GM12878 (cell line): ENCODE measurements at regions of chr15 and their contacts with region 1.

Region 1: GRCh38 chr15:73081321-73081958 is 29.2 kb downstream of the NEO1 start:
- DNase-seq: no peak
- ATAC-seq: peak; percentile 50; the same call in 1 of the 3 replicates
- H3K4me3 ChIP-seq: no peak overlapping the region
- H3K27ac ChIP-seq: no peak overlapping the region
- H3K4me1 ChIP-seq: no peaks in the 10 kb centered on the region
- H3K27me3 ChIP-seq: no peaks in the 10 kb centered on the region
- CTCF ChIP-seq: peak; percentile 33 to 54 (median 38); a peak in 5 of 6 replicates
- EP300 ChIP-seq: no peak
- POLR2A ChIP-seq: no peak
- RAD21 ChIP-seq: peak; percentile 75

Region 2: DNA sequence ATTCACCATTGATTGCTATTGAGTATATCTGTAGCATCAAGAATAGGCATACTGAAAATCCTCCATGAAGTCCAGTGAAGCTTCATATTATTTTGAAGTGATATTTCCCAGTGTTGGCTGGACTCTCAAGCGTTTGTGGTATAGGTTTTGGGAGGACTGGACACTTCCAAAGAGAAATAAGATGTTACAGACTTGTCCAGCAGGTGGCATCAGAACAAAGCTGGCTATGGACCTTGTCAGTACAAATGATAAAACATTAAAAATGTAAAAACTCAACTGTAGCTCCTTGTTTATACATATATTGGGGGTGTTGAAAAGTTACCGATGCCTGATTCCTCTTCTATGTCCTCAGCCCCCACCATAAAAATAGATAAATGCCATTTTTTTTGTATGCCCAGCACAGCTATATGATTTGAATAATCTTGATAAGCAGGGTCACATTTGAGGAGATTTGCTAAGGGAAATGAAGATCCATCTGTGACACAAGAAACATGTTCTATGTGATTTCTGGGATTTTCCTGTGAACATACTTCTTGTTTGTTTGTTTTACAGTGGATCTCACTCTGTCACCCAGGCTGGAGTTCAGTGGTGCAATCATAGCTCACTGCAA is 481.5 kb before region 1 on chr15:
- CTCF ChIA-PET with region 1: interaction called, 16 read pairs
- POLR2A ChIA-PET with region 1: no interaction called
- RAD21 ChIA-PET with region 1: interaction called, 5 read pairs
- SMC1A ChIA-PET with region 1: no interaction called
- in situ Hi-C with region 1: no loop called
- intact Hi-C with region 1: loop called (anchors 5 kb)
- DNase-seq: no peak
- ATAC-seq: peak; percentile 80
- H3K4me3 ChIP-seq: no peak overlapping the region
- H3K27ac ChIP-seq: no peak overlapping the region
- H3K4me1 ChIP-seq: no peaks in the 10 kb centered on the region
- H3K27me3 ChIP-seq: no peaks in the 10 kb centered on the region
- CTCF ChIP-seq: peak; percentile 50 to 62 (median 60)
- EP300 ChIP-seq: no peak
- POLR2A ChIP-seq: no peak
- RAD21 ChIP-seq: peak; percentile 56

Region 3: GRCh38 chr15:72732516-72732915 is 348.9 kb before region 1 on chr15:
- CTCF ChIA-PET with region 1: interaction called, 3 read pairs
- POLR2A ChIA-PET with region 1: no interaction called
- RAD21 ChIA-PET with region 1: no interaction called
- SMC1A ChIA-PET with region 1: no interaction called
- in situ Hi-C with region 1: loop called (anchors 5 kb)
- intact Hi-C with region 1: no loop called
- DNase-seq: no peak
- ATAC-seq: 0 out of 3 replicates have a peak, but pooled peaks have one; percentile 41
- H3K4me3 ChIP-seq: no peak overlapping the region
- H3K27ac ChIP-seq: no peak overlapping the region
- H3K4me1 ChIP-seq: no peaks in the 10 kb centered on the region; the same call in 1 of the 2 replicates
- H3K27me3 ChIP-seq: no peaks in the 10 kb centered on the region
- CTCF ChIP-seq: peak in 1 of 3 experiments; percentile 14; a peak in 1 of 6 replicates
- EP300 ChIP-seq: no peak
- POLR2A ChIP-seq: no peak
- RAD21 ChIP-seq: 0 out of 2 replicates have a peak, but pooled peaks have one; percentile 3

Region 4: GRCh38 chr15:72783563-72784237 is 297.7 kb before region 1 on chr15 and contains the start of gene ADPGK:
- CTCF ChIA-PET with region 1: interaction called, 4 read pairs
- POLR2A ChIA-PET with region 1: no interaction called
- RAD21 ChIA-PET with region 1: no interaction called
- SMC1A ChIA-PET with region 1: interaction called, 4 read pairs
- in situ Hi-C with region 1: loop called (anchors 5 kb)
- intact Hi-C with region 1: no loop called
- DNase-seq: peak; percentile 70
- ATAC-seq: peak; percentile 86
- H3K4me3 ChIP-seq: peak within 1 kb of the TSS; percentile 94
- H3K27ac ChIP-seq: peak within 1 kb of the TSS; percentile 93
- H3K4me1 ChIP-seq: peaks cover 31% of the 10 kb centered on the region
- H3K27me3 ChIP-seq: no peaks in the 10 kb centered on the region
- CTCF ChIP-seq: 0 out of 6 replicates have a peak, but pooled peaks of 1 of the 3 experiments have one; percentile 0
- EP300 ChIP-seq: peak in 1 of 2 experiments; percentile 34; a peak in 1 of 4 replicates
- POLR2A ChIP-seq: peak; percentile 98
- RAD21 ChIP-seq: no peak
- polyA plus RNA-seq, gene ADPGK: 13.8 to 18.1 TPM

Region 5: GRCh38 chr15:72796515-72797337 is 284.7 kb before region 1 on chr15:
- CTCF ChIA-PET with region 1: interaction called, 10 read pairs
- POLR2A ChIA-PET with region 1: no interaction called
- RAD21 ChIA-PET with region 1: no interaction called
- SMC1A ChIA-PET with region 1: no interaction called
- in situ Hi-C with region 1: no loop called
- intact Hi-C with region 1: loop called (anchors 1 kb)
- DNase-seq: no peak
- ATAC-seq: peak; percentile 96
- H3K4me3 ChIP-seq: peak overlapping the region; percentile 25; the same call in 1 of the 2 replicates
- H3K27ac ChIP-seq: no peak overlapping the region
- H3K4me1 ChIP-seq: peaks cover 8% of the 10 kb centered on the region; the same call in 1 of the 2 replicates
- H3K27me3 ChIP-seq: peaks cover 0 to 3% of the 10 kb centered on the region in 2 experiments; a peak in 1 of 4 replicates
- CTCF ChIP-seq: peak; percentile 50 to 55 (median 52); a peak in 5 of 6 replicates
- EP300 ChIP-seq: no peak
- POLR2A ChIP-seq: no peak
- RAD21 ChIP-seq: peak; percentile 59